Activated CD8-positive, alpha-beta T cell treated with anti-CD3 and anti-CD28 coated beads, Interleukin-2, amount 10 ng/mL, durations not matched to agents 7 days and 5 days (primary cell): ENCODE measurements at regions of chr15 and their contacts with region 1.

Region 1: GRCh38 chr15:73704869-73705645 is 20.9 kb downstream of the CD276 start:
- DNase-seq: peak; percentile 79
- ATAC-seq: peak; percentile 82
- H3K4me3 Mint-ChIP-seq: no peak overlapping the region
- H3K27ac Mint-ChIP-seq: no peak overlapping the region
- H3K4me1 Mint-ChIP-seq: peaks cover 2% of the 10 kb centered on the region
- H3K27me3 Mint-ChIP-seq: peaks cover 11% of the 10 kb centered on the region

Region 2: GRCh38 chr15:73240866-73241499 is 464.1 kb before region 1 on chr15:
- CTCF ChIA-PET with region 1: interaction called, 15 read pairs
- POLR2A ChIA-PET with region 1: no interaction called
- DNase-seq: peak; percentile 83
- ATAC-seq: peak; percentile 51
- H3K4me3 Mint-ChIP-seq: no peak overlapping the region
- H3K27ac Mint-ChIP-seq: no peak overlapping the region
- H3K4me1 Mint-ChIP-seq: no peaks in the 10 kb centered on the region
- H3K27me3 Mint-ChIP-seq: peaks cover 5% of the 10 kb centered on the region

Region 3: GRCh38 chr15:73560501-73561117 is 144.4 kb before region 1 on chr15:
- CTCF ChIA-PET with region 1: interaction called, 21 read pairs
- POLR2A ChIA-PET with region 1: interaction called, 4 read pairs
- DNase-seq: peak; percentile 51
- ATAC-seq: no peak
- H3K4me3 Mint-ChIP-seq: no peak overlapping the region
- H3K27ac Mint-ChIP-seq: no peak overlapping the region
- H3K4me1 Mint-ChIP-seq: peaks cover 8% of the 10 kb centered on the region
- H3K27me3 Mint-ChIP-seq: no peaks in the 10 kb centered on the region

Region 4: GRCh38 chr15:73677146-73677607 is 27.9 kb before region 1 on chr15:
- CTCF ChIA-PET with region 1: interaction called, 108 read pairs
- POLR2A ChIA-PET with region 1: no interaction called
- DNase-seq: peak; percentile 63
- ATAC-seq: peak; percentile 65
- H3K4me3 Mint-ChIP-seq: no peak overlapping the region
- H3K27ac Mint-ChIP-seq: no peak overlapping the region
- H3K4me1 Mint-ChIP-seq: peaks cover 12% of the 10 kb centered on the region
- H3K27me3 Mint-ChIP-seq: peaks cover 47% of the 10 kb centered on the region

Region 5: GRCh38 chr15:73683777-73684580 is 21.1 kb before region 1 on chr15 and contains the start of gene CD276:
- CTCF ChIA-PET with region 1: interaction called, 108 read pairs
- POLR2A ChIA-PET with region 1: no interaction called
- DNase-seq: peak; percentile 20
- ATAC-seq: peak; percentile 64
- H3K4me3 Mint-ChIP-seq: no peak within 1 kb of the TSS
- H3K27ac Mint-ChIP-seq: no peak within 1 kb of the TSS
- H3K4me1 Mint-ChIP-seq: peaks cover 11% of the 10 kb centered on the region
- H3K27me3 Mint-ChIP-seq: peaks cover 75% of the 10 kb centered on the region
- total RNA-seq, gene CD276: not detected

Region 6: DNA sequence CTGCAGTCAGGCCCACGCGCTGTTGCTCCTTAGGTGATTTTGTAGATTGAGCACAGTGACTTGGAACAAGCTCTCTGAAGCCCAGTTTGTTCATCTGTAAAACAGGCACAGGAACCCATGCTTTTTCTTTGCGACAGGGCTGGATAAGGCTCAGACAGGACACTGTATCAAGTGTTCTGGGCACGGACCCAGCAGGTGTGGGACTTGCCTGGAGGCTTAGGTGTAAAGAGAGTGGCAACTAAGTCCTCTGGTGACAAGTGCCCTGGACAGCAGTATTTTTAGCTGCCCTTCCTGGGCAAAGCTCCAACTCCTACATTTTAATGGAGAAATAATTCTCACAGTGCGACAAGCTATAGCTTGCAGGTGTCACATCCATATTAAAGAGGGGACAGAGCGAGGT is 11.4 kb after region 1 on chr15:
- CTCF ChIA-PET with region 1: interaction called, 11 read pairs
- POLR2A ChIA-PET with region 1: no interaction called
- DNase-seq: no peak
- ATAC-seq: no peak
- H3K4me3 Mint-ChIP-seq: no peak overlapping the region
- H3K27ac Mint-ChIP-seq: no peak overlapping the region
- H3K4me1 Mint-ChIP-seq: no peaks in the 10 kb centered on the region
- H3K27me3 Mint-ChIP-seq: peaks cover 7% of the 10 kb centered on the region